H1 (cell line): ENCODE measurements at regions of chr3 and their contacts with region 1.

Region 1: GRCh38 chr3:152574461-152575079 is 260.4 kb upstream of the P2RY1 start:
- DNase-seq: no peak
- H3K4me3 ChIP-seq: no peak overlapping the region
- H3K27ac ChIP-seq: no peak overlapping the region
- H3K4me1 ChIP-seq: no peaks in the 10 kb centered on the region
- H3K27me3 ChIP-seq: no peaks in the 10 kb centered on the region
- CTCF ChIP-seq: peak in 2 of 3 experiments; percentile 56 to 59; a peak in 3 of 4 replicates
- EP300 ChIP-seq: no peak
- POLR2A ChIP-seq: no peak
- RAD21 ChIP-seq: peak; percentile 79 to 80

Region 2: DNA sequence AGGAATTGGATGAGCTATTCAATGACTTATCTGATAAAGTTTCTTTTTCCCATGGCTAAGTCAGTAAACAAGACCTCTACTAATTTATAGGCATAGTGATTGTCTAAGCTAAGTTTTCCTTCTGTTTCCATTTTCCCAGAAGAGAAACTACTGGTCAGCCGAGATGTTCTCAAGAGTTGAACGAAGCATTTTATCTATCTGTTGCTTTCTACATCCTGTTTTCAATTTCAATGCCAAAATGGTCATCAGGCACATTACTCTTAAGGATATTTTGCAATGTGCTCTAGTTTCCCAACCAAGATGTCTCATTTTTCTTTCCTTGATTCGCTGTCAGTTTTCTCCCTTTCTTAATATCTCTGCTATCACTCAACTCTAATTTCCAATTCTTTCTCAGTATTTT is 77.1 kb before region 1 on chr3:
- CTCF ChIA-PET with region 1: interaction called, 10 read pairs
- POLR2A ChIA-PET with region 1: no interaction called
- DNase-seq: no peak
- H3K4me3 ChIP-seq: no peak overlapping the region
- H3K27ac ChIP-seq: no peak overlapping the region
- H3K4me1 ChIP-seq: peaks cover 0 to 4% (median 2%) of the 10 kb centered on the region in 4 experiments; a peak in 1 of 7 replicates
- H3K27me3 ChIP-seq: no peaks in the 10 kb centered on the region
- CTCF ChIP-seq: no peak
- EP300 ChIP-seq: no peak
- POLR2A ChIP-seq: no peak
- RAD21 ChIP-seq: no peak

Region 3: DNA sequence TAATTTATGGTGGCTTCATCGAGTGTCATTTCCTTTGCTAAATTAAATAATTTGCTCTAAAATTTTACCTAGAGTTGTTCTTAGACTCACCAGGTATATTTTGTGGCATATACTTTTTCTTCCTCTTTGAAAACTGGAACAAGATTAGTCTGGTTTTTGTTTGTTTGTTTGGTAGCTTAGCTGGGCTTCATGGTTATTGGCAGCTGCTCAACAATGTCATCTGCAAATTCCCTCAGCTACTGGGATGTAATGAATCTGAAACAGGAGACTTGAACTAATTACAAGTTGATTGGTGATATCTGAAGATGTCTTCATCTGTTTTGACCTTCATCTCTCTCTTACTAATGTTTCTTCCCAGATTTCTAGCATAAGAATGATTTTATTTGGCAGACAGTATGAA is 10.1 kb before region 1 on chr3:
- CTCF ChIA-PET with region 1: interaction called, 18 read pairs
- POLR2A ChIA-PET with region 1: no interaction called
- DNase-seq: no peak
- H3K4me3 ChIP-seq: no peak overlapping the region
- H3K27ac ChIP-seq: no peak overlapping the region
- H3K4me1 ChIP-seq: no peaks in the 10 kb centered on the region
- H3K27me3 ChIP-seq: no peaks in the 10 kb centered on the region
- CTCF ChIP-seq: no peak
- EP300 ChIP-seq: no peak
- POLR2A ChIP-seq: no peak
- RAD21 ChIP-seq: no peak